Lower leg skin (tissue), 4 donors: ENCODE measurements at regions of chr15 and their contacts with region 1.

Region 1: DNA sequence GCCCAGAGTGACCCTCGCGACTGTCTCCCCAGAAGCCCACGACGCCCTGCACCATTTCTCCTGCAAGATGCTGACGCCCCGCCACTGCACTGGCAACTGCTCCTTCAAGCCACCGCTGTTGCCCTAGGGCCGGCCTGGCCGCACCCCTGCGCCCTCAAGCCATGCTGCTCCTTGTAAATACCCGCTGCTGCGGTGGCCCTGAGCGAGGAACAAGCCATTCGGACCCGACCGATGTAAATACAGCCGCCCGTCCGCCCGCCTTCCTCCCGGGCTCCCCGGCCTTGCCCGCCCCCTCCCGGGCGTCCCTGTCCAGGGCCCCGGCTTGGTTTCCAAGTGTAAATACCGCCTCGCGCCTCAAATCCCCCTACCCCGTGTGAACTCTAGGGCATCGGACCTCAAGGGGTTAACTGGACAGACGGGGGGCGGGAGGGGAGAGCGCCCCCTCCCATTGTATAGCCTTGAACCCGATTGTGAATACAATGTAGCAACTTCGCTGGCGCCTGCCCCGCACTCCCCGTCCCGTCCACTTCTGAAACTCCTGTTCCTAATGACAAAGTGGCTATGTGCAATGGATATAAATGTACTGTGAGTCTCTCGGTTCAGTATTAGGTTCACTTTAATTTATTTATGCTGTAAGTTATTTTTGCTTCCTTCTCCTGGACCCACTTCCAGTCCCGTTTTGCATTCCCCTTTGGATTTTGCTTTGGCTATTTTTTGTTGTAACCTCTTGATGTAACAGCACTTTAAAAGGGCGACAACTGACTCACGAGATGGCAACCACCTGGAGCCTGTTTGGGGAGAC is 5.9 kb downstream of the RNU6-1 start:
- DNase-seq: peak in 1 of 2 donors; percentile 89
- H3K4me3 ChIP-seq: no peak overlapping the region
- CTCF ChIP-seq: no peak
- POLR2A ChIP-seq: no peak

Region 2: DNA sequence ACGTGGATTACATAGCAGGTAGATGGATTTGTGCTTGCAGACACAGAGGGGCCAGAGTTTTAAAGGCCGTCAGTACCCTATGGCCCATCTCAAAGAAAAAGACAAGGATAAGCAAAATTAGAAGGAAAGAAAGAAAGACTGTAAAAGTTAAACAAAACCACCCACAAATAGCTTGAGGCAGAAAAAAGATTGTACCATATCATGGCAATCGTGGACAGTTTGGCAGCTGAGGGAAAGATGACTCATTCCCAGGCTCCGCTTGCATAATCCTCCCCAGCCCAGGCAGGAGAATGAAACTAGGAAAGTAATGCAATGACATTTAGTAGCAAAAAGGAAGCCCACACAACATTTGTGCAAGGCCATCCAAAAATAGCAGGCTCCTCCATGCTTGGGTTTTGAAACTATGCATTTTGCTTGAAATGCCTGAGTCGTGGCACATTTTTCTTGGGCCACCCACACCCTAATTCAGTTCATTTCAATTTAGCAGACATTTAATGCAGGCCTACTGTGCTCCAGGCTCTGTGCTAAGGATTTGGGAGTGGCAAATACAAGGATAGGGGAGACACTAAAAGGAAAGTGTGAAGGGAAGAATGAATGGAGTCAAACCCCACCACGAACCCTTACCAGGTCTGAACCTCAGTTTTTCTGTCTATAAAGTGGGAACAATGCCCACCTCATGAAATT is 809.5 kb before region 1 on chr15:
- intact Hi-C with region 1: no loop called
- DNase-seq: peak; percentile 90 to 96
- H3K4me3 ChIP-seq: no peak overlapping the region
- CTCF ChIP-seq: no peak
- POLR2A ChIP-seq: no peak

Region 3: GRCh38 chr15:67456677-67457529 is 377.0 kb before region 1 on chr15:
- intact Hi-C with region 1: loop called (anchors 5 kb)
- DNase-seq: peak; percentile 69 to 96
- H3K4me3 ChIP-seq: no peak overlapping the region
- CTCF ChIP-seq: peak in 1 of 3 donors; percentile 52
- POLR2A ChIP-seq: no peak

Region 4: DNA sequence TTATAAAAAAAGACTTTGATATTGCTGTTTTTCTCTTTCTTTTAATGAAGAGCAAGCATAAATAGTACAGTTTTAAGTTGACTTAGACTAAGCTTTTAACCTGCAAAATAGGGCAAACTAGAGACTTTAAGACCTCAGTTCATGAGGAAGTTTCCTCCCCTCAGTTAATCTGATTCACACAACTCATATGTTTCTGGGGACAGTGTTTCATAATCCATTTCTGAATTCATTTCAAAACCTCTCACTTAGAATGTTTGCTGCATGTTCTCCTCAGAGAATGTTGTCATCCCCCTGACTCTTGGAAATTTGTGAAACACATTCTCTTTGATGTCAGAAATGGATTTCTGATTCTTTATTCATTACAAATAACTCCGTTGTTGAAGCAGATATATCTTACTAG is 87.9 kb before region 1 on chr15:
- intact Hi-C with region 1: no loop called
- DNase-seq: no peak
- H3K4me3 ChIP-seq: no peak overlapping the region
- CTCF ChIP-seq: no peak
- POLR2A ChIP-seq: no peak